CD4-positive, alpha-beta memory T cell (primary cell): ENCODE measurements at regions of chr4 and their contacts with region 1.

Region 1: DNA sequence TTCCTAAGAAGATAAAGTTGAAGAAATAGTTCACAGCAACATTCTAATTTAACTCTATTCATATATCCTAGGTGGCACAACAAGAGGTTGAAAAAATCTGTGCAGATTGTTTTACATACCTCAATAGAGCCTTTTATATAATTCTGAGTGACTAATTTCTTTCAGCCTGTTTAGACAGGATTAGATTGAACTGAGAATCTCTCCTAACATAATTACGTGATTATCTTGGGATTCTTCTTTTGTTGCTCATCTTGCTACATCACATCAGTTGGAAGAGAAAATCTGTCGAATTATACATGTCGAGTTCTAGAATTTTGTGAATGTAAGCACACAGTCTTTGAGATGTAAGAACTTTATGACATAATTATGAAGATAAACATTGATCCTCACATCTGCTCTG is 1873.7 kb upstream of the IGFBP7 start:
- DNase-seq: no peak
- H3K4me3 ChIP-seq: no peak overlapping the region
- H3K4me3 Mint-ChIP-seq: no peak overlapping the region
- H3K27ac ChIP-seq: no peak overlapping the region
- H3K27ac Mint-ChIP-seq: no peak overlapping the region
- H3K4me1 ChIP-seq: no peaks in the 10 kb centered on the region
- H3K4me1 Mint-ChIP-seq: no peaks in the 10 kb centered on the region
- H3K27me3 ChIP-seq: no peaks in the 10 kb centered on the region
- H3K27me3 Mint-ChIP-seq: no peaks in the 10 kb centered on the region

Region 2: DNA sequence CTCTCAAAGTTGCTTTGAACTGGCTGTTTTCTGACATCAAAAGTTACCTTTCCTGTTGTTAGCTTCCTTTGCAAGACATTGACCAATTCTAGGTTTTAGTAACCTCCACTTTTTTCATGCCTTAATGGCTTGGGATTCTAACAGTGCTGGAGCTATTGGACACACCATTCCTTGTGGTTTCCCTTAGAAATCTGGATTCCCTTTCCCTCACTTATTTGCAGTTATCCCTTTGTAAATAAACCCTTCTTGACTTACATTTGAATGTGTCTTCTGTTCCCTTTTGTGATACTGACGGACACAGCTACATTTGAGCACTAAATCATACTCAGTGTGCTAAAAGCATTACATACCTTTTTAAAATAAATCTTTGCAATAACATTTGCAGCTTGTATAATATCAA is 53.9 kb after region 1 on chr4:
- CTCF ChIA-PET with region 1: no interaction called
- POLR2A ChIA-PET with region 1: no interaction called
- intact Hi-C with region 1: loop called (anchors 5 kb)
- DNase-seq: no peak
- H3K4me3 ChIP-seq: no peak overlapping the region
- H3K4me3 Mint-ChIP-seq: no peak overlapping the region
- H3K27ac ChIP-seq: no peak overlapping the region
- H3K27ac Mint-ChIP-seq: no peak overlapping the region
- H3K4me1 ChIP-seq: no peaks in the 10 kb centered on the region
- H3K4me1 Mint-ChIP-seq: no peaks in the 10 kb centered on the region
- H3K27me3 ChIP-seq: no peaks in the 10 kb centered on the region
- H3K27me3 Mint-ChIP-seq: no peaks in the 10 kb centered on the region

Region 3: GRCh38 chr4:59091146-59092142 is 107.6 kb after region 1 on chr4:
- CTCF ChIA-PET with region 1: no interaction called
- POLR2A ChIA-PET with region 1: no interaction called
- intact Hi-C with region 1: no loop called
- DNase-seq: no peak
- H3K4me3 ChIP-seq: no peak overlapping the region
- H3K4me3 Mint-ChIP-seq: no peak overlapping the region
- H3K27ac ChIP-seq: no peak overlapping the region
- H3K27ac Mint-ChIP-seq: no peak overlapping the region
- H3K4me1 ChIP-seq: no peaks in the 10 kb centered on the region
- H3K4me1 Mint-ChIP-seq: no peaks in the 10 kb centered on the region
- H3K27me3 ChIP-seq: no peaks in the 10 kb centered on the region
- H3K27me3 Mint-ChIP-seq: no peaks in the 10 kb centered on the region